PC-9 (cell line): ENCODE measurements at regions of chr4 and their contacts with region 1.

Region 1: GRCh38 chr4:139651282-139652194 is 14.1 kb upstream of the MGST2 start:
- DNase-seq: peak; percentile 49 to 60
- H3K4me3 ChIP-seq: no peak overlapping the region
- H3K27ac ChIP-seq: no peak overlapping the region
- H3K4me1 ChIP-seq: peaks cover 16% of the 10 kb centered on the region
- H3K27me3 ChIP-seq: no peaks in the 10 kb centered on the region
- CTCF ChIP-seq: peak; percentile 93

Region 2: GRCh38 chr4:138967313-138967712 is 684.2 kb before region 1 on chr4:
- CTCF ChIA-PET with region 1: interaction called, 15 read pairs
- POLR2A ChIA-PET with region 1: no interaction called
- intact Hi-C with region 1: no loop called
- DNase-seq: peak in 1 of 2 experiments; percentile 46
- H3K4me3 ChIP-seq: no peak overlapping the region
- H3K27ac ChIP-seq: no peak overlapping the region
- H3K4me1 ChIP-seq: 0 out of 2 replicates have a peak, but pooled peaks cover 8% of the 10 kb centered on the region
- H3K27me3 ChIP-seq: no peaks in the 10 kb centered on the region
- CTCF ChIP-seq: no peak

Region 3: DNA sequence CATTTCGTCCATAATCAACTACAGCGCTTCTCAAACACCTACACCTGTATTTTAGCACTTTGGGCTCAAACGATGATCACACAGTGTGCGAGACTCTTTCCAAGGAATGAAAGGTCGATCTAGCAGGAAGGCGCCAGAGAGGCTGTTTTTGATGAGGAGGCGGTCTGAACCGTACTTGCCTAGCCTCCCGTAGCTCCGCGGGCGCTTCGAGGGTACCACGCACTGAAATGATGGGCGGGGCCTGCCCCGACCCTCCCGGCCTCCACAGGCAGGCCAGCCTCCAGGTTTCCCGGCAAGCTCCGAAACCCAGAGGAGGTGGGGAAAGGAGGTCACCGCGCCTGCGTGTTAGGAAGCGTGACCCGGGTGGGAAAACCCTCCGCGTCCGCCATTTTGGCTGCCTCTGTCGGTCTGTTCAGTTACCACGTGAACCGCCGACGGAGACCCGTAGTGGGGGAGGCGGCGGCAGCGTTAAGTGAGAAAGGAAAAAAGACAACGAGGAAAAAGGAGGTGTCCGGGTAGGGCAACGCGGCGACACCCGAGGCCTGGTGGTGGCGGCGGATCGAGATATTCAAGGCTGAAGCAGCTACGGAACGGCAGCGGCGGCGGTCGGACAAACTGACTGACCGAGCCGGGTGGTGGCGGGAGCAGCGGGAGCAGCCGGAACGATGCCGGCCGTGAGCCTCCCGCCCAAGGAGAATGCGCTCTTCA is 350.3 kb before region 1 on chr4 and contains the start of gene NAA15:
- CTCF ChIA-PET with region 1: no interaction called
- POLR2A ChIA-PET with region 1: no interaction called
- intact Hi-C with region 1: loop called (anchors 10 kb)
- DNase-seq: peak; percentile 87 to 97
- H3K4me3 ChIP-seq: peak within 1 kb of the TSS; percentile 74
- H3K27ac ChIP-seq: peak within 1 kb of the TSS; percentile 83
- H3K4me1 ChIP-seq: peaks cover 24% of the 10 kb centered on the region
- H3K27me3 ChIP-seq: no peaks in the 10 kb centered on the region
- CTCF ChIP-seq: no peak
- total RNA-seq, gene NAA15: 43.8 and 51.7 TPM in 2 replicates

Region 4: GRCh38 chr4:139403462-139403861 is 248.1 kb before region 1 on chr4:
- CTCF ChIA-PET with region 1: no interaction called
- POLR2A ChIA-PET with region 1: no interaction called
- intact Hi-C with region 1: loop called (anchors 5 kb)
- DNase-seq: no peak
- H3K4me3 ChIP-seq: no peak overlapping the region
- H3K27ac ChIP-seq: no peak overlapping the region
- H3K4me1 ChIP-seq: no peaks in the 10 kb centered on the region
- H3K27me3 ChIP-seq: no peaks in the 10 kb centered on the region
- CTCF ChIP-seq: no peak

Region 5: DNA sequence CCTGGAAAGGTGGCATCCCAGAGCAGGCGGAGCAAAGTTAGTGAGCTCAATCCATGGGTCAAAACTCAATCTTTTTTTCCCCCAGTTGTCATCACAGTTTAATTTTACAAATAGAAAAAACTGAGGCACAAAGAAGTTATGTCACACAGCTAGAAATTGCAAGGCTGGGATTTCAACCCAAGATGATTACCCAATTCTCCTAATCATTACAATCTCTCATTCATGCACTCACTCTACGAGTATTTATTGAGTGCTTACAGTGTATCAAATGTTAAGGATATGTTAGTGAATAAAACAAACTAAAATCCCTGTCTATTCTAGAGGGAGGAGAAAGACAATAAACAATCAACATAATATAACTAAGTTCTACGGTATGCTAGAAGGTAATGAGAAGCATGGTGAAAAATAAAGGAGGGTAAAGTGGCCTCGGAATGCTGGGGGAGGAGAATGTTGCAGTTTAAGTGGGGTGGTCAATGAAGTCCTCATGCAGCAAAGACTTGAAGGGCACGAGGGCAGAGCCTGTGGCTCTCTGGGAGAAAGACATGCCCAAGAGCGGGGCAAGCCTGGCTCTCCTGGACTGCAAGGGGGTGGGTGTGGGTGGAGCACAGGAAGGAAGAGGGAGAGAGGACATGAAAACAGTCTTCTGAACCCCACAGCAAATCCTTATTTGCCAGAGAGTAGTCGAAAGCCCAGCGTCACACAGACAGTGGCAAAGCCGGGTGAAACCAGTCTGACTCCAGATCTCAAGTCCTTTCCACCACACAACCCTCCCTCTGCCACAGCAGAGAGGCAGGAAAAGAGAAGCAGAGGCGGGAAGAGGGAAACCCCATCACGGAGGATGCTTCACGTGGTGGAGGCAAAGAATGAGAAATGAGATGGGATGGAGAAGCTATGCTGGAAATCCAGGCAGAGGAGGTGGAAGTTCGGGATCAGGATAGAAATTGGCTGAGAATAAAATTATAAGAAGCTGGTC is 149.3 kb before region 1 on chr4:
- CTCF ChIA-PET with region 1: interaction called, 3 read pairs
- POLR2A ChIA-PET with region 1: no interaction called
- intact Hi-C with region 1: loop called (anchors 5 kb)
- DNase-seq: no peak
- H3K4me3 ChIP-seq: no peak overlapping the region
- H3K27ac ChIP-seq: no peak overlapping the region
- H3K4me1 ChIP-seq: no peaks in the 10 kb centered on the region
- H3K27me3 ChIP-seq: no peaks in the 10 kb centered on the region
- CTCF ChIP-seq: no peak